ENCODE measurements at regions of chr4 and their contacts with region 1.

Region 1: DNA sequence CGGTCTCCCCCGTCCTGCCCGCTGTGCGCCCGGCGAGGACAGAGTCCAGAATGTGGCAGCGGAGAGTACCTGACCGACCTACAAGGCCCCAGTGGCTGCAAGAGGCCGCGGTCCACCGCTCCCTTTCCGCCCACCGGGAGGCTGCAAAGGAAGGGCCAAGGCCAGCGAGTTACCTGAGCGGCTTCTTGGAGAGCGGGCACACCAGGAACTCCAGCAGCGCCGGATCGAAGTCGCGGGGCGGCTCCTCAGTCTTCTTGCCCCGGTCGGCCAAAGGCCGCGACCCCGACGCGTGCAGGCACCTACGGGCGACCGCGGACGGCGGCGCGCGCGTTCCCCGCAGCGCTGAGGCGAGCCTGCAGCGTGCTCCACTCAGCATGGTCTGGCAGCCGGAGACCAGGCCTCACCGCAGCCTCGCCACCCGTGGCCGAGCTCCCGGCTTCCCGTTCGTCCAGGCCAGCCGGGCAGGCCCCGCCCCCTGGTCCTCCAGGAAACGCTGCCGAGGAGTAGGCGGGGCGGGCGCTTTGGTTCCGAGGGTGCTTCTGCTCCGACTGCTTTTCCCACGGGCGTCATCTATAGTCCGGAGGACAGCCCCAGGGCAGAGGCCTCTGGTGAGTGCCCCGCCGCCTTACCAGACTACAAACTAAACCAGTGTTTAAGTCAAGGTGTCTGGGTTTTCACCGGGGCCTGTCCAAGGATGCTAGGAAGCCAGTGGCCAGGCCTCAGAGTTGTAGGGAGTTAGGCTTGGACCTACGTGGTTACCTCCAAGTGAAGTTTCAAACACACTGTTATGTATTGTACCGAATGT is at the start of gene PYURF:
- DNase-seq: peak; percentile 87
- ATAC-seq: peak; percentile 87
- H3K4me3 Mint-ChIP-seq: peak within 1 kb of the TSS; percentile 91
- H3K27ac Mint-ChIP-seq: peak within 1 kb of the TSS; percentile 83
- H3K4me1 Mint-ChIP-seq: peaks cover 49% of the 10 kb centered on the region
- H3K27me3 Mint-ChIP-seq: no peaks in the 10 kb centered on the region
- total RNA-seq, gene PYURF: 44.3 to 51.2 TPM

Region 2: DNA sequence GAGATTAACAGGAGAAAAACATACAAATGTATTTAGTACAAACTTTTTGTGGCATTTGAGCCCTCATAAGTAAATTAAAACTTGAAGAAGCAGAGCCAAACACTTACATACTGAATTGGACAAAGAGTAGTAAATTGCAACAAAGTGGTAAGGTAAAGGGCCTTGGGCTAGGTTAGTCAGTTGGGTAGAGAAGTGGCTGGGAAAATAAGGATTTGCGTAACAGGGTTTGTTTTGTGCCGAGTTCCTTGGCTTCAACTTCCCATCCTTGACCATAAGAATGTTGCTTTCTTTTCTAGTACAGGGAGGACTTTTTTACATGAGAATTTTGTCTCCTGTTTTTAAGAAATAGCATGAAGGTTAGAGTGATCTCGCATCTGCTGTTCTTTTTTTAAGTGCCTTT is 948.5 kb before region 1 on chr4:
- CTCF ChIA-PET with region 1: no interaction called
- DNase-seq: no peak
- ATAC-seq: no peak
- H3K4me3 Mint-ChIP-seq: no peak overlapping the region
- H3K27ac Mint-ChIP-seq: no peak overlapping the region
- H3K4me1 Mint-ChIP-seq: peaks cover 10% of the 10 kb centered on the region
- H3K27me3 Mint-ChIP-seq: peaks cover 4% of the 10 kb centered on the region

Region 3: DNA sequence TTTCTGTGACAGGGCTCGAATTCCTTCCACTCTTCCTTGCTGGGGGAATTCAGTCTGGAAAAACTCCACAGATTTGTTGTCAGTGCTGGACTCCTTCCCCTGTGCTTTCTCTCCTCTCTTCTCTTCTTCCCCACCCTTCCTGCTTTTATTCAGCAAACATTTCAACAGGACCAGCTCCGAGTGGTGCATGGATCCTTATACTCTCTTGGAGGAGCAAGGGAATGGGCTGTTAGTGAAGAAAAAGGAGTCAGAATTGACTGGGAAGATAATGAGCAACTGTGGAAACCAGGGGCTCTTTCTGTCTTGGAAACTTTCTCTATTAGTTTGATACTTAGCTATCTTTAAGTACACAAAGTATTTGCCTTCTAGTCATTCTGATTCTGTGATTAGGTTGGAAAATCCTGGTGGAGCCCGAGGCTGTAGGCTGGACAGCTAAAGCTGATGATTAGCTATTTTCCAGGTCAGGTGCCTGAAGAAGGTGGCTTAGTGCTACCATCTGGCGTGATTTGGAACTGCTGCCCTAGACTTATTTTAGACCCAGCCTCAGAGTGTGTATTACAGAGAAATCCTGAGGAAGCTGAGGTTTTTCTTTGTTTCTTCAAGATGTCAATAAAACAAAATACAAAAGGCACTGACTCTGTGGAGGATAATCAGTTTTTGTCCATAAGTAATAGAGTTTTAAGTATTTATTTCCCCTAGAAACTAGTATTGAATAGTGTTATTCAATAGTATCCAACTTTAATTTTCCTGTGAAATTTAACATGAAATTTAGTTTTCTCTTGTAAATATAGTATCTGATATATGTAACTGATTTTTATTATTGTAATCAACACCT is 135.7 kb after region 1 on chr4:
- CTCF ChIA-PET with region 1: interaction called, 12 read pairs
- DNase-seq: peak; percentile 47
- ATAC-seq: peak; percentile 86
- H3K4me3 Mint-ChIP-seq: no peak overlapping the region
- H3K27ac Mint-ChIP-seq: no peak overlapping the region
- H3K4me1 Mint-ChIP-seq: peaks cover 13% of the 10 kb centered on the region
- H3K27me3 Mint-ChIP-seq: no peaks in the 10 kb centered on the region

Region 4: GRCh38 chr4:89000844-89001360 is 477.4 kb after region 1 on chr4:
- CTCF ChIA-PET with region 1: no interaction called
- DNase-seq: no peak
- ATAC-seq: no peak
- H3K4me3 Mint-ChIP-seq: no peak overlapping the region
- H3K27ac Mint-ChIP-seq: no peak overlapping the region
- H3K4me1 Mint-ChIP-seq: no peaks in the 10 kb centered on the region
- H3K27me3 Mint-ChIP-seq: no peaks in the 10 kb centered on the region

Region 5: GRCh38 chr4:89024051-89024675 is 500.6 kb after region 1 on chr4:
- CTCF ChIA-PET with region 1: interaction called, 17 read pairs
- DNase-seq: peak; percentile 62
- ATAC-seq: peak; percentile 90
- H3K4me3 Mint-ChIP-seq: no peak overlapping the region
- H3K27ac Mint-ChIP-seq: no peak overlapping the region
- H3K4me1 Mint-ChIP-seq: no peaks in the 10 kb centered on the region
- H3K27me3 Mint-ChIP-seq: no peaks in the 10 kb centered on the region

Measured in activated CD8-positive, alpha-beta memory T cell treated with anti-CD3 and anti-CD28 coated beads, Interleukin-2, amount 10 ng/mL, durations not matched to agents 7 days and 5 days (primary cell).